ENCODE measurements at regions of chr19 and their contacts with region 1.

Region 1: GRCh38 chr19:44113138-44113783 is at the start of gene ZNF225:
- DNase-seq: peak; percentile 98
- H3K4me3 ChIP-seq: peak within 1 kb of the TSS; percentile 80 to 94 (median 84)
- H3K27ac ChIP-seq: peak within 1 kb of the TSS; percentile 32
- H3K4me1 ChIP-seq: peaks cover 6% of the 10 kb centered on the region
- H3K27me3 ChIP-seq: no peaks in the 10 kb centered on the region
- CTCF ChIP-seq: no peak
- POLR2A ChIP-seq: peak; percentile 85
- total RNA-seq, gene ZNF225: 3.9 and 4.1 TPM in 2 replicates

Region 2: DNA sequence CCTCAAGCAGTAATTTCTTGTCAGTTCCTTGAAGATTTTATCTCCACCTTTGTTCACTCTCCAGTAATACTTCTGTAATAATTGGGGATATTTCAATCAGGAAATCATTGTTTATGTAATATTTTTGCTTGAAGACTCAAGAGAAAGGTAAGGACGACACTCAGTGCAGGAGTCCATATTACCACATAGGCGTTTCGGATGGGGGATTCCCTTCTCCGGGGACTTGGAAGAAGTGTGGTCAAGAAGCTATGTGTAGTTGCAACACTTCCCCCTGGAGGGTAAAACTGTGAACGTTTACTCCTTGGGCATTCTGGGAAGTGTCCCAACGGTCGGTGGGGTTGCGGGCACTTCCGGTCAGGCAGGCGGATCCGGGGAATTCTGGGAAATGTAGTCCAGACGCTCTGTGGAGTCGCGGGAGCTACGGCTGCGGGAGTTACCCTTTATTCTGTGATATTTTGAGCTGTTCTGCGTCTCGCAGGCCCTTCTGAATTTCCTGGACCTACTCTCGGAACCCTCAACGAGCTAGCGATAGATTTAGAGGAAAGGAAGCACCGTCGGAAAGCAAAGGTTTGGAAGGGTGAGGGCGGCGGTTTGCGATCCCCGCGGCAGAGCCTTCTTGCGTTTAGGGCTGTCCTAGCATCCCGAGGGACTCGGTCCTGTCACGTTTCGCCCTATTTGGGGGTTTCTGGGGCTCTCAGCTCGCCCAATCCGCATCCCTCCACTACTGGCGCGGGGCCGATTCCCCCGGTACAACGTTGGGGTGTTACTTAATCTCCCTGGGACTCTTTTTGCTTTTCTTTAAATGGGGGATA is 162.2 kb before region 1 on chr19 and contains the start of gene ZNF221:
- CTCF ChIA-PET with region 1: no interaction called
- POLR2A ChIA-PET with region 1: no interaction called
- dilution Hi-C with region 1: no loop called
- intact Hi-C with region 1: loop called (anchors 1 kb)
- DNase-seq: peak; percentile 98
- H3K4me3 ChIP-seq: peak within 1 kb of the TSS; percentile 49 to 73 (median 55)
- H3K27ac ChIP-seq: peak within 1 kb of the TSS; percentile 4
- H3K4me1 ChIP-seq: no peaks in the 10 kb centered on the region
- H3K27me3 ChIP-seq: no peaks in the 10 kb centered on the region
- CTCF ChIP-seq: peak; percentile 41 to 60
- POLR2A ChIP-seq: no peak
- total RNA-seq, gene ZNF221: 4.2 and 6.0 TPM in 2 replicates

Region 3: GRCh38 chr19:44025217-44025936 is 87.9 kb before region 1 on chr19 and contains the start of gene ZNF222:
- CTCF ChIA-PET with region 1: no interaction called
- POLR2A ChIA-PET with region 1: no interaction called
- dilution Hi-C with region 1: no loop called
- intact Hi-C with region 1: loop called (anchors 1 kb)
- DNase-seq: peak; percentile 88
- H3K4me3 ChIP-seq: peak within 1 kb of the TSS; percentile 76 to 91 (median 88)
- H3K27ac ChIP-seq: peak within 1 kb of the TSS; percentile 70
- H3K4me1 ChIP-seq: no peaks in the 10 kb centered on the region
- H3K27me3 ChIP-seq: peaks cover 2 to 3% of the 10 kb centered on the region in 2 experiments
- CTCF ChIP-seq: no peak
- POLR2A ChIP-seq: peak; percentile 61
- total RNA-seq, gene ZNF222: 4.7 and 5.2 TPM in 2 replicates

Region 4: DNA sequence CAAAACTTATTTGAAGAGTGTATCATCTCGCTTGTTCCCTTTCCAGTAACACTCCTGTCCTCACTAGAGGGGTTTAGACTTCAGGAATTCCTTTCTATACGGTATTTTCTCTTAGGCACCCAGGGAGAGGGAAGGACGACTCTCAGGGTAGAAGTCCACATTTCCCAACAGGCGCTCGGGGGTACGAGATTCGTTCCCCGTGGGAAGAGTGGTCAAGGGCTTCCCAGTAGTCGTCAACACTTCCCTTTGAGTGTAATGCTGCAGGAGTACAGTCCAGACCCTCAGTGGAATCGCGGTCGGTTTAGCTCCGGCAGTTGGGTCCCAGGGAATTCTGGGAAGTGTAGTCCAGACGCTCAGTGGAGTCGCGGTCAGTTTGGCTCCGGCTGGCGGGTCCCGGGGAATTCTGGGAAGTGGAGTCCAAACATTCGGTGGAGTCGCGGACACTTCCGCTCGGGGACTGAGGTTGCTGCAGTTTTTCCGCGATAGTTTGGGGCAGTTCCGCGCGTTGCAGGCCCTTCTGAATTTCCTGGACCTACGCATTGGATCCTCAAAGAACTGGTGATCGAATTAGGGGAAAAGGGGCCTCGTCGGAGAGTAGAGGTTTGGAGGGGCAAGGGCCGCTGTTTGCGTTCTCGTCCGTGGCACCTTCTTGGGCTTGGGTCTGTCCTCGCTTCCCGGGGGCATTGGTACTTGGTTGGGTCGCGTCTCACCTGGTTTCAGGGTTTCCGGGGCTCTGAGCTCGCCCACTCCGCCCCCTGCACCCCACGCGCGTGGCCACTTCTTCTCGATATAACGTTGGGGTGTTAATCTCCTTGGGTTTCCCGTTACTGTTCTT is 19.1 kb before region 1 on chr19 and contains the start of gene ZNF224:
- CTCF ChIA-PET with region 1: no interaction called
- POLR2A ChIA-PET with region 1: no interaction called
- dilution Hi-C with region 1: no loop called
- intact Hi-C with region 1: loop called (anchors 1 kb)
- DNase-seq: peak; percentile 95
- H3K4me3 ChIP-seq: peak within 1 kb of the TSS; percentile 57 to 97 (median 95)
- H3K27ac ChIP-seq: peak within 1 kb of the TSS; percentile 42
- H3K4me1 ChIP-seq: peaks cover 8% of the 10 kb centered on the region
- H3K27me3 ChIP-seq: no peaks in the 10 kb centered on the region
- CTCF ChIP-seq: no peak
- POLR2A ChIP-seq: peak; percentile 59
- total RNA-seq, gene ZNF224: 19.4 and 21.8 TPM in 2 replicates

Region 5: GRCh38 chr19:44207126-44207803 is 94.0 kb after region 1 on chr19:
- CTCF ChIA-PET with region 1: no interaction called
- POLR2A ChIA-PET with region 1: no interaction called
- dilution Hi-C with region 1: no loop called
- intact Hi-C with region 1: loop called (anchors 1 kb)
- DNase-seq: peak; percentile 91
- H3K4me3 ChIP-seq: peak overlapping the region; percentile 69 to 93 (median 87)
- H3K27ac ChIP-seq: peak overlapping the region; percentile 65
- H3K4me1 ChIP-seq: peaks cover 3% of the 10 kb centered on the region
- H3K27me3 ChIP-seq: no peaks in the 10 kb centered on the region
- CTCF ChIP-seq: no peak
- POLR2A ChIP-seq: peak; percentile 82

Region 6: GRCh38 chr19:44356383-44357111 is 243.3 kb after region 1 on chr19 and contains the start of gene ZNF112:
- CTCF ChIA-PET with region 1: no interaction called
- POLR2A ChIA-PET with region 1: no interaction called
- dilution Hi-C with region 1: no loop called
- intact Hi-C with region 1: loop called (anchors 2 kb)
- DNase-seq: peak; percentile 93
- H3K4me3 ChIP-seq: peak within 1 kb of the TSS; percentile 41 to 60 (median 58)
- H3K27ac ChIP-seq: no peak within 1 kb of the TSS
- H3K4me1 ChIP-seq: peaks cover 4% of the 10 kb centered on the region
- H3K27me3 ChIP-seq: no peaks in the 10 kb centered on the region
- CTCF ChIP-seq: no peak
- POLR2A ChIP-seq: peak; percentile 56
- total RNA-seq, gene ZNF112: 4.6 and 7.5 TPM in 2 replicates

Measured in endothelial cell of umbilical vein (primary cell).